ENCODE measurements at regions of chr17 and their contacts with region 1.

Region 1: DNA sequence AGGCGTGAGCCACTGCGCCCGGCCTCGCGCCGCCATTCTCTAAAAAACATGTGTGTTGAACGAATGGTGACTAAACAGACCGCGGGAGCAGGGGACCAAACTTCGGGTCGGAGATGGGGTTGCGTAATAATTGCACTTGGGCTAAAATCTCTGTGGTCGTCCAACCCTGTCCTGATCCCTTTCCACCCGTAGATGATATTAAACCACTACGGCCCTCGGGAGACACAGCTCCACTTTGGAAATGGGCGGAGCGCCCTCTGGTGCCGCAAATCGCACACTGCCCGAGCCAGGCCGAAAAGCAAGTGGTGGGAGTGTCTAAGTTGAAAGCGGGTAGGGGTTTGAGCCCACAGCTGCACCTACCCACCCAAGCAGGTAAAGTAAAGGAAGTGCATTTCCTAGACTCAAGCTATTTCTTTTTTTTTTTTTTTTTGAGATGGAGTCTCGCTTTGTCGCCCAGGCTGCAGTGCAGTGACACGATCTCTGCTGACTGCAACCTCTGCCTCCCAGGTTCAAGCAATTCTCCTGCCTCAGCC is 17.0 kb downstream of the CAVIN1 start:
- DNase-seq: peak; percentile 84
- CTCF ChIP-seq: peak; percentile 91

Region 2: GRCh38 chr17:42183741-42184711 is 222.0 kb before region 1 on chr17:
- in situ Hi-C with region 1: loop called (anchors 25 kb)
- DNase-seq: peak; percentile 96
- CTCF ChIP-seq: peak; percentile 98

Region 3: GRCh38 chr17:42322382-42323267 is 83.4 kb before region 1 on chr17:
- in situ Hi-C with region 1: loop called (anchors 5 kb)
- DNase-seq: peak; percentile 88
- CTCF ChIP-seq: peak; percentile 99

Region 4: DNA sequence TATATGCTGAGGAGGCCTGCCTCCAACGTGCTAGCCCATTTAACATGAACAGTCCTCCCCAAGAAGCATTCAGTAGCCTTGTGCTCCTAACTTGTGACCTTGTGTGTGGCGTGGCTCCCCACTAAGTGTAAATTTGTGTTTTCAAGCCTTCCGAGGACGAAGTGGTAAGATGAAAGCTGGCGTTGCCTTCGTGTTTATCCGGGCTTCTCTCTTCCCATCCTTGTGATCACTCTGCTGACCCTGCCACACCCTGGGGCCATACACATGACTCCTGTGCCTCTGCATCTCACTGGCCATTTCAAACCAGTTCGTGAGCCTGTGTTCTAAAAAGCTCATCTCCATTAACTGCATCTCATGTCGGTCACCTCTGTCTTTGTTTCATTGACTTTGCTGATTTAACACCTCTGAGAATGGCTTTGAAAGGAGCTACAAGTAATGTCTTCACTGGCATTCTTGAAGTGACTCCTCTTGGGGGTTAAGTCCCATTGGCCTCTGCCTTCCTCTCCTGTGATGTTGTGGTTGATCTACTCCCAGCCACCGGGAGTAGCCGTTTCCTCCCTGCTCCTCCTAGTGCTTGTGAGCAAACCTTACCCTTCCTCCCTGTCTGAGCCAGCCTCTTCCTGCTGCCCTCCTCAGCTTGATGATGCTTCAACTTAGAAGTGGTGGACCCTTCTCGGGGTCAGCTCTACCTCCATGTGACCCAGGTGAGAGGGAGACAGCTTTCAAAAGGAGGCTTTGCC is 102.6 kb after region 1 on chr17:
- in situ Hi-C with region 1: loop called (anchors 5 kb)
- DNase-seq: no peak
- CTCF ChIP-seq: no peak

Region 5: GRCh38 chr17:42527273-42527703 is 121.3 kb after region 1 on chr17:
- in situ Hi-C with region 1: no loop called
- DNase-seq: peak; percentile 79
- CTCF ChIP-seq: peak; percentile 86

Measured in GM13976 (cell line).